Calu3 (cell line): ENCODE measurements at regions of chr7 and their contacts with region 1.

Region 1: GRCh38 chr7:2555121-2556052 is at the start of gene BRAT1:
- DNase-seq: peak; percentile 99
- H3K4me3 Mint-ChIP-seq: peak within 1 kb of the TSS; percentile 93
- H3K27ac Mint-ChIP-seq: peak within 1 kb of the TSS; percentile 93
- H3K4me1 Mint-ChIP-seq: peaks cover 38% of the 10 kb centered on the region
- H3K27me3 Mint-ChIP-seq: no peaks in the 10 kb centered on the region
- CTCF ChIP-seq: peak; percentile 71
- total RNA-seq, gene BRAT1: 56.2 and 59.6 TPM in 2 replicates

Region 2: GRCh38 chr7:2523941-2524807 is 31.2 kb before region 1 on chr7:
- CTCF ChIA-PET with region 1: interaction called, 6 read pairs
- intact Hi-C with region 1: loop called (anchors 5 kb)
- DNase-seq: peak; percentile 99
- H3K4me3 Mint-ChIP-seq: peak overlapping the region; percentile 99
- H3K27ac Mint-ChIP-seq: peak overlapping the region; percentile 77
- H3K4me1 Mint-ChIP-seq: peaks cover 46% of the 10 kb centered on the region
- H3K27me3 Mint-ChIP-seq: no peaks in the 10 kb centered on the region
- CTCF ChIP-seq: no peak

Region 3: GRCh38 chr7:2701832-2702593 is 146.6 kb after region 1 on chr7:
- CTCF ChIA-PET with region 1: interaction called, 12 read pairs
- intact Hi-C with region 1: no loop called
- DNase-seq: no peak
- H3K4me3 Mint-ChIP-seq: no peak overlapping the region
- H3K27ac Mint-ChIP-seq: no peak overlapping the region
- H3K4me1 Mint-ChIP-seq: no peaks in the 10 kb centered on the region
- H3K27me3 Mint-ChIP-seq: peaks cover 63% of the 10 kb centered on the region
- CTCF ChIP-seq: no peak